ENCODE measurements at regions of chr6 and their contacts with region 1.

Region 1: GRCh38 chr6:126361832-126362412 is 22.0 kb downstream of the CENPW start:
- DNase-seq: no peak
- ATAC-seq: no peak
- H3K4me3 ChIP-seq: no peak overlapping the region
- H3K27ac ChIP-seq: no peak overlapping the region
- H3K4me1 ChIP-seq: no peaks in the 10 kb centered on the region
- H3K27me3 ChIP-seq: no peaks in the 10 kb centered on the region
- CTCF ChIP-seq: no peak
- POLR2A ChIP-seq: no peak
- RAD21 ChIP-seq: no peak

Region 2: DNA sequence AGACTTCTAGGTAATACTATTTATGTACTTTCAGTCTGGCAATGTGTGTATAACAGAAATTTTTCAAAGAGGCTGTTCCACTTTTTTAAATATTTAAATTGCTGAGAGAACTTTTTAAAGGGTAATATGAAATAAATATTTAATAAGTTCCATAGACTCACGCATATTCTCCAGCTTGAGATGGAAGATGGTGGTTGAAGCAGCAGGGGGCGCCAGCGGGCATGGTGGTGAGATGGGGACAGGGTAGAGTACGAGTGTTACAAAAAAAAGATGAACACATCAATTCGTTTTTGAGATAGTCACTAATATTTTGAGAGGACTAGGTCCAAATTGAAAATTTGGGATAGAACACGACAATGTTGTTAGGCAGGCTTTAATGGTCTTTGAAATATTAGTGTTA is 825.0 kb after region 1 on chr6:
- CTCF ChIA-PET with region 1: no interaction called
- POLR2A ChIA-PET with region 1: no interaction called
- dilution Hi-C with region 1: no loop called
- in situ Hi-C with region 1: no loop called
- intact Hi-C with region 1: loop called (anchors 5 kb)
- DNase-seq: no peak
- ATAC-seq: no peak
- H3K4me3 ChIP-seq: no peak overlapping the region
- H3K27ac ChIP-seq: no peak overlapping the region
- H3K4me1 ChIP-seq: no peaks in the 10 kb centered on the region
- H3K27me3 ChIP-seq: no peaks in the 10 kb centered on the region; the same call in 1 of the 2 replicates
- CTCF ChIP-seq: peak; percentile 37; the same call in 1 of the 2 replicates
- POLR2A ChIP-seq: no peak
- RAD21 ChIP-seq: 0 out of 2 replicates have a peak, but pooled peaks have one; percentile 25